GM23248 (cell line): ENCODE measurements at regions of chr15 and their contacts with region 1.

Region 1: DNA sequence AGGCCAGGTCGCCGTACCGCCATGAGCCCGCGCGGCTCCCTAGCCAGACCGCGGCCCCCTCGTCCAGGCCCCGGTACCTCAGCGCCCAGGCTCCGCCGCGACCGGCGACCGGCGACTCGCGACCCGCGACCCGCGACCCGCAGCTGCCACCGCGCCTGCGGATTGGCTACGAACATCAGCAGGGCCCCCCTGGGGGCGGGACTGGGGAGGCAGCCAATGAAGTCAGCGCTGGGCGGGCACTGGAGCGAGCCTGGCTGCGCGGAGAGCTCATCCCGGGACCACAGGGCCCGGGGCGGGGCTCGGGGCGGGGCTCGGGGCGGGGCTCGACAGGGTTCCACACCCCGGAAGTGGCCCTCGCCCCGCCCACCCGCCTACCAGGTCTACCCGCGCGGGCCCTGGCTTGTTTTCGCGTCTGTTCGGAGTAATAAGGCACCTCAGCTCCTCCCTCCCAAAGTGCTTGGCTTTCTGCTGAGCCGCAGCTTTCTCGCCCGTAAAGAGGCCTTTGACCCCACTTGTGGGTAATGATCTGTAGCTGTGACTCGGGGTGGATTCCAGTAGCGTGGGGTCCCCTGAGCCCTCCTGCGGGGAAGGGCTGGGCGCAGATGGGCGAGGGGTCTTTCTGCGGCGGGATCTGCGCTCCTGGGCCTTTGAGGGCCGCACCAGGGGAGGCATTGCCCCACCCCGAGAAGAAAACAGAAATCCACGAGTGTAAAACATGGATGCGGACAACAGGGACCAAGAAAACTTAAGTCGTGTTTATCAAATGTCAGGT is at the start of gene LYSMD4:
- DNase-seq: peak; percentile 97
- H3K4me3 ChIP-seq: peak within 1 kb of the TSS; percentile 85
- H3K27ac ChIP-seq: no peak within 1 kb of the TSS
- H3K4me1 ChIP-seq: peaks cover 12% of the 10 kb centered on the region
- H3K27me3 ChIP-seq: no peaks in the 10 kb centered on the region
- total RNA-seq, gene LYSMD4: 3.2 and 8.1 TPM in 2 replicates

Region 2: DNA sequence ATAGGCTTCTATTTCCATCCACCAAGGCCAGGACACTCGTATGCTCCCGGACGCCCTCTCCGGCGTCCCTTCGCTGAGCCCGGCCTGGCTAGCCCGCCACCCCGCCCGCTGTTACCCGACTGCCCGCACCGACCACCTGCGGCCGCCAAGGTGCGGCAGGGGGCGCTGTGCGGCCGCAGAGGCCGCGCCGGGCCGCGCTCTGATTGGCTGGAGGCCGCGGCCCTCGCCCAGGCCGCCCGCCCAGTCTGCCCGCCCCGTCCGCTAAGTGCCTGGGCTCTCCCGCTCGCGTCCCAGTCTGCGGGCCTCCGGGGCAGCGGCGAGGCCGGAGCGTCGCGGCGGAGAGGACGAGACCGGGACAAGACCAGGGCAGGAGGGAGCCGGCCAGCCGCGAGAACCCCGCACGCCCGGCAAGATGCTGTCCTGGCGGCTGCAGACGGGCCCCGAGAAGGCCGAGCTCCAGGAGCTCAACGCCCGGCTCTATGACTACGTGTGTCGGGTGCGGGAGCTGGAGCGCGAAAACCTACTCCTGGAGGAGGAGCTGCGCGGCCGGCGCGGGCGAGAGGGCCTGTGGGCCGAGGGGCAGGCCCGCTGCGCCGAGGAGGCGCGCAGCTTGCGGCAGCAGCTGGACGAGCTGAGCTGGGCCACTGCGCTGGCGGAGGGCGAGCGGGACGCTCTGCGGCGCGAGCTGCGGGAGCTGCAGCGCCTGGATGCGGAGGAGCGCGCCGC is 628.5 kb before region 1 on chr15 and contains the start of gene SYNM:
- in situ Hi-C with region 1: loop called (anchors 25 kb)
- DNase-seq: peak; percentile 81
- H3K4me3 ChIP-seq: peak within 1 kb of the TSS; percentile 56
- H3K27ac ChIP-seq: no peak within 1 kb of the TSS
- H3K4me1 ChIP-seq: 0 out of 2 replicates have a peak, but pooled peaks cover 4% of the 10 kb centered on the region
- H3K27me3 ChIP-seq: peaks cover 11% of the 10 kb centered on the region; the same call in 1 of the 2 replicates
- total RNA-seq, gene SYNM: 0.97 and 1.6 TPM in 2 replicates

Region 3: DNA sequence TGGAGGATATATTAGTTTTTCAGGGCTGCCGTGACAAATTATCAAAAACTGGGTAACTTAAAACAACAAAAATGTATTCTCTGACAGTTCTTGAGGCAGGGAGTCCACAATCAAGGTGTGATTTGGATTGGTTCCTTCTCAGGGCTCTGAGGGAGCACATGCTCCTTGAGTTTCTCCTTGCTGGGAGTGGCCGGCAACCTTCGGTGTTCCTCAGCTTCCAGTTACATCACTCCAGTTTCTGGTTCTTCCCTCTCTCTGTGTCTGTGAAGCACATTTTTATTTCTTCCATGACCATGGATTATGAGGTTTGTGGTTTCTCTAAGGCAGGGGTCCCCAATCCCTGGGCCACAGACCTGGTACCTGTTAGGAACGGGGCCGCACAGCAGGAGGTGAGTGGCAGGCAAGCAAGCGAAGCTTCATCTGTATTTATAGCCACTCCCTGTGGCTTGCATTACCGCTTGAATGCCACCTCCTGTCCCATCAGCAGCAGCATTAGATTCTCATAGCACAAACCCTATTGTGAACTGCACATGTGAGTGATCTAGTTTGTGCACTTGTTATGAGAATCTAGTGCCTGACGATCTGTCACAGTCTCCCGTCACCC is 457.8 kb before region 1 on chr15:
- in situ Hi-C with region 1: loop called (anchors 10 kb)
- DNase-seq: no peak
- H3K4me3 ChIP-seq: no peak overlapping the region
- H3K27ac ChIP-seq: no peak overlapping the region
- H3K4me1 ChIP-seq: no peaks in the 10 kb centered on the region
- H3K27me3 ChIP-seq: no peaks in the 10 kb centered on the region

Region 4: DNA sequence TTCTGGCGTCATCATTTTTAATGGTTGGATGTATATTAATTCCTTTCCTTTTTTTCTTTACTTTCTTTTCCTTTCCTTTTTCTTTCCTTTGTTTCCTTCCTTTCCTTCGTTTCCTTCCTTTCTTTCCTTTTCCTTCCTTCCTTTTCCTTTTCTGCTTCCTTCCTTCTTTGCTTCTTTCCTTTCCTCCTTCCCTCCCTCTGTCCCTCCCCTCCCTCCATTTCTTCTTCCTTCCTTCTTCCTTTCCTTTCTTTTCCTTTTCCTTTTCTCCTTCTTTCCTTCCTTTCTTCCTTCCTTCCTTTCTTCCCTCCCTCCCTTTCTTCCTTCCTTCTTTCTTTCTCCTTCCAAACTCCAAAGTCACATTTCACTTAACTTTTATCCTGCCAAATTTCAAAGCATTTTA is 54.7 kb after region 1 on chr15:
- in situ Hi-C with region 1: loop called (anchors 10 kb)
- DNase-seq: no peak
- H3K4me3 ChIP-seq: no peak overlapping the region
- H3K27ac ChIP-seq: no peak overlapping the region
- H3K4me1 ChIP-seq: no peaks in the 10 kb centered on the region
- H3K27me3 ChIP-seq: 0 out of 2 replicates have a peak, but pooled peaks cover 3% of the 10 kb centered on the region

Region 5: GRCh38 chr15:99857836-99858235 is 124.4 kb after region 1 on chr15:
- in situ Hi-C with region 1: no loop called
- DNase-seq: no peak
- H3K4me3 ChIP-seq: no peak overlapping the region
- H3K27ac ChIP-seq: no peak overlapping the region
- H3K4me1 ChIP-seq: no peaks in the 10 kb centered on the region
- H3K27me3 ChIP-seq: no peaks in the 10 kb centered on the region

Region 6: DNA sequence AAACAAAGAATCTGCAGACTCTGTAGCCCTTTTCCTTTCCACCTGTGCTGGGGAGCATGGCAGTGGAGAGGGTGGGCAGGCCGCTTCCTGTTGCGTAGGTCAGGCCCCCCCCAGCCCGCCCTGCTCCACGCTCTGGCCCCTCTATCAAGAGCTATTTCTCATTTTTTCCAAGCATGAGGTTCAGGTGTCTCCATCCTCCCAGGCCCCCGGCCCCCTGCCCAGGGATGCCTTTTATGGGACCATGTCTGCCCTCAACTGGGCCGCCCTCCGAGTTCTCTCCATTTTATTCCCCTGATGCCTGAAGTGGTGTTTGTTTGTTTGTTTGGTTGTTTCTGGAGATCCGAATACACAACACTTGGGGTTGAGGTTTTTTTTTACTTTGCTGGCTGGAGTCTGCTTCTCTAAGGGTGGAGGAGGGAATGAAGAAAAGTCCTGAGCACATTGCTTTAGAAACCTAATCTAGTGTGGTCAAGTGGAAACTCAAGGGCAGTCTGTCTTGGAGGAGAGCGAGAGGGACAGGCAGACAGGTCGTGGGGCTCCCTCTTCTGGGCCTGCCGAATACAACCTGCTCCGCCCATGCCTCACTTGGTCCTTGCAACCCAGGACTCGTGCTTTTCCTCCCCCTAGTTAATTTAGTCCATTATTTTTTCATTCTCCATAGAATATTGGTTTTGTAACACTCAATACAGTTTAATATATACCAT is 176.3 kb after region 1 on chr15:
- in situ Hi-C with region 1: no loop called
- DNase-seq: peak; percentile 3
- H3K4me3 ChIP-seq: no peak overlapping the region
- H3K27ac ChIP-seq: no peak overlapping the region
- H3K4me1 ChIP-seq: no peaks in the 10 kb centered on the region
- H3K27me3 ChIP-seq: no peaks in the 10 kb centered on the region

Region 7: GRCh38 chr15:100078511-100079220 is 345.2 kb after region 1 on chr15:
- in situ Hi-C with region 1: no loop called
- DNase-seq: no peak
- H3K4me3 ChIP-seq: no peak overlapping the region
- H3K27ac ChIP-seq: no peak overlapping the region
- H3K4me1 ChIP-seq: no peaks in the 10 kb centered on the region
- H3K27me3 ChIP-seq: no peaks in the 10 kb centered on the region